ENCODE measurements at regions of chr19 and their contacts with region 1.

Region 1: GRCh38 chr19:54357381-54357780 is 7.3 kb downstream of the LAIR1 start:
- DNase-seq: no peak
- ATAC-seq: no peak
- H3K4me3 Mint-ChIP-seq: no peak overlapping the region
- H3K27ac Mint-ChIP-seq: no peak overlapping the region
- H3K4me1 Mint-ChIP-seq: peaks cover 22% of the 10 kb centered on the region
- H3K27me3 Mint-ChIP-seq: no peaks in the 10 kb centered on the region

Region 2: GRCh38 chr19:54325194-54325621 is 32.2 kb before region 1 on chr19:
- CTCF ChIA-PET with region 1: interaction called, 7 read pairs
- POLR2A ChIA-PET with region 1: no interaction called
- intact Hi-C with region 1: loop called in 1 of 2 experiments (anchors 1 kb)
- DNase-seq: peak; percentile 56
- ATAC-seq: peak; percentile 72
- H3K4me3 Mint-ChIP-seq: no peak overlapping the region
- H3K27ac Mint-ChIP-seq: no peak overlapping the region
- H3K4me1 Mint-ChIP-seq: peaks cover 19% of the 10 kb centered on the region
- H3K27me3 Mint-ChIP-seq: peaks cover 10% of the 10 kb centered on the region

Measured in activated CD4-positive, alpha-beta T cell treated with anti-CD3 and anti-CD28 coated beads for 36 hours (primary cell).